ENCODE measurements at regions of chr9 and their contacts with region 1.

Region 1: DNA sequence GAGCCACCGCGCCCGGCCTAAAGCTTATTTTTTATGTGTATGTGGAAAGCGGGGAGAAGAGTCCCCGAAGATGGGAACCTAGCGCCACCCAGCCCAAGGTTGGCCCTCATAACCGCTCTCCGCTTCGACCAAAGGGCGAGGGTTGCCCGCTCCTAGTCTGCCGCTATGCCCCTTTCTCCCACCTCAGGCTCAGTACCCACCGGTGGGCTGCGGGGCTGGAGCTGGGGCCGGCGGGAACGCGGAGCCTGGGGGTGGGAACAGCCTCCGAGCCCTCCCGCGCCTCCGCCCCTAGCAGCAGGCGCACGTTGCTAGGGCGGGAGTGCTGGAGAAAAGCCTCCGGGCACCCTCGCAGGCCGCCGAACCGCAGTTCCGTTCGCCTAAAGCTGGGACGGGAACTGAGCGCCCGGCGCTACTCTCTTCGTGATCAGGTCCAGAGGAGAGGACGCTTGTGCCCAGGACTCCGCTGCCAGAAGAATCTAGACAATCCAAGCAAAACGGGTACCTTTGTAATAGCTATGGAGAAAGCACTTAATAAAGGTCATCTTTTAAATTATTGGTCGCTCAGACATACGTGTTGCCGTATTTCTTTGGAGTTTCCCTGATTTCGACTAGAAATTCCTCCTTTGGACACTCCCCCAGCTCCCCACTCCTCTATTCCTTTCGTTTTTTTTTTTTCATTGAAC is at the start of gene WDR31:
- DNase-seq: peak; percentile 84
- ATAC-seq: peak; percentile 97
- H3K4me3 ChIP-seq: peak within 1 kb of the TSS; percentile 42 to 85 (median 73)
- H3K4me3 Mint-ChIP-seq: peak within 1 kb of the TSS; percentile 90
- H3K27ac ChIP-seq: peak within 1 kb of the TSS in 1 of 2 donors; percentile 41
- H3K27ac Mint-ChIP-seq: peak within 1 kb of the TSS; percentile 84
- H3K4me1 ChIP-seq: peaks cover 8 to 12% of the 10 kb centered on the region in 2 donors
- H3K4me1 Mint-ChIP-seq: peaks cover 16% of the 10 kb centered on the region
- H3K27me3 ChIP-seq: no peaks in the 10 kb centered on the region
- H3K27me3 Mint-ChIP-seq: peaks cover 8% of the 10 kb centered on the region
- CTCF ChIP-seq: no peak
- total RNA-seq, gene WDR31: 0.62 and 1.0 TPM in 2 replicates

Region 2: GRCh38 chr9:113376634-113377567 is 36.7 kb after region 1 on chr9 and contains the start of gene HDHD3:
- CTCF ChIA-PET with region 1: no interaction called
- POLR2A ChIA-PET with region 1: no interaction called
- intact Hi-C with region 1: loop called (anchors 1 kb)
- DNase-seq: peak; percentile 89
- ATAC-seq: peak; percentile 92
- H3K4me3 ChIP-seq: peak within 1 kb of the TSS; percentile 51 to 98 (median 87)
- H3K4me3 Mint-ChIP-seq: peak within 1 kb of the TSS; percentile 96
- H3K27ac ChIP-seq: peak within 1 kb of the TSS; percentile 56 to 78
- H3K27ac Mint-ChIP-seq: peak within 1 kb of the TSS; percentile 87
- H3K4me1 ChIP-seq: peaks cover 7 to 21% of the 10 kb centered on the region in 2 donors
- H3K4me1 Mint-ChIP-seq: peaks cover 24% of the 10 kb centered on the region
- H3K27me3 ChIP-seq: no peaks in the 10 kb centered on the region
- H3K27me3 Mint-ChIP-seq: no peaks in the 10 kb centered on the region
- CTCF ChIP-seq: no peak
- total RNA-seq, gene HDHD3: 26.2 and 29.6 TPM in 2 replicates

Measured in B cell (primary cell).